Calu3 (cell line): ENCODE measurements at regions of chr3 and their contacts with region 1.

Region 1: DNA sequence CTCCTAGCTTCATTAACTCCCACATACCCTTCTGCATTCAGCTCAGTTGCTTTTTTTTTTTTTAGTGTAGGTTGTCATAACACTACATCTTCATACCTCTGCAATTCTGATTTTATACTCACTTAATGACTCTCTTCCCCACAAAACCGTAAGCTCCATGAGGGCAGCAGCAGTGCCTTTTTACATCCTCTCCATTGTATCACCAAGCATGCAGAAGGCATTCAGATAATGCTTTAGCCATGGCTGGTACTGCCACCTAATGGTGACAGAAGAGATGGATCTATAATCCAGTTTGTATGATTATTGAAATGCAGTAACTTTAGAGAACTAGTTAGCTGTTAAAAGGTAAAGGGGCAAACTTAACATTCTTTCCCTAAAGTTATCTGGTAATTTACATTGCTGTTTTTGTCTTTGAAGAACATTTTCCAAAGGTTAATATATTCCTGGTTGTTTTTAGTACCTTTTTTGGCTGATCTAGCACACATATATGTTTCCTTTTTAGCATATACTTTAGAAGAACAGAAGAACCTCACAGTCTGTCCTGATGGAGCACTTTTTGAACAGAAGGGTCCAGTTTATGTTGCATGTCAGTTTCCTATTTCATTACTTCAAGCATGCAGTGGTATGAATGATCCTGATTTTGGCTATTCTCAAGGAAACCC is 36.8 kb downstream of the ATP1B3 start:
- DNase-seq: peak; percentile 68
- H3K4me3 Mint-ChIP-seq: no peak overlapping the region
- H3K27ac Mint-ChIP-seq: no peak overlapping the region
- H3K4me1 Mint-ChIP-seq: no peaks in the 10 kb centered on the region
- H3K27me3 Mint-ChIP-seq: no peaks in the 10 kb centered on the region
- CTCF ChIP-seq: peak; percentile 47

Region 2: DNA sequence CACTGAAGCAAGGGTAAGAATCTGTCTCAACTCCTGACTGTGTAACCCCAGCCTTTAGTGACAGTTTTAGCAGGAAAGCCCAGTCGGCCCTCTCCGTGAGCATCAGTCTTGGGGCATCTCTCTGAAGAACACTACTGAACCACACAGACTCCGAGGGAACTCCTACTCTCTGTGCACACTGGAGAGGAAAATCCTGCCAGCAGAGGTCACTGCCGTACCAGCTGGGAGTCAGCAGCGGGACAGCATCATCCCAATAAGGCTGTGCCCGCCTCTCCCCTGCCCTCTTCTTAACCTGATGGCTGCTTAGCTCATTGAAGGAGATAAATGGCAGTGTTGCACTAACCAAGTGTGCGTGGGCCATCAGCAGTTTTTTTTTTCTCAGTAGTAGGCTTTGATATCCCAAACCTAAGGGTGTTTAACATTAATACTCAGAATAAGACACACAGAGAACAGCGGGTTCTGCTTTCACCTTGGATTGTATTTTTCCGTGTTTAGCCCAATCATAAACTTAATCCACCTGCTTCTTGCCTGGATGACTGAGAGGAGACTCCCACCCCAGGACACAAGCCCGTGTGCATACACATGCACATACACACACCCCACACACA is 453.1 kb before region 1 on chr3:
- CTCF ChIA-PET with region 1: no interaction called
- intact Hi-C with region 1: loop called (anchors 1 kb)
- DNase-seq: peak; percentile 96
- H3K4me3 Mint-ChIP-seq: no peak overlapping the region
- H3K27ac Mint-ChIP-seq: no peak overlapping the region
- H3K4me1 Mint-ChIP-seq: peaks cover 27% of the 10 kb centered on the region
- H3K27me3 Mint-ChIP-seq: no peaks in the 10 kb centered on the region
- CTCF ChIP-seq: peak; percentile 90

Region 3: DNA sequence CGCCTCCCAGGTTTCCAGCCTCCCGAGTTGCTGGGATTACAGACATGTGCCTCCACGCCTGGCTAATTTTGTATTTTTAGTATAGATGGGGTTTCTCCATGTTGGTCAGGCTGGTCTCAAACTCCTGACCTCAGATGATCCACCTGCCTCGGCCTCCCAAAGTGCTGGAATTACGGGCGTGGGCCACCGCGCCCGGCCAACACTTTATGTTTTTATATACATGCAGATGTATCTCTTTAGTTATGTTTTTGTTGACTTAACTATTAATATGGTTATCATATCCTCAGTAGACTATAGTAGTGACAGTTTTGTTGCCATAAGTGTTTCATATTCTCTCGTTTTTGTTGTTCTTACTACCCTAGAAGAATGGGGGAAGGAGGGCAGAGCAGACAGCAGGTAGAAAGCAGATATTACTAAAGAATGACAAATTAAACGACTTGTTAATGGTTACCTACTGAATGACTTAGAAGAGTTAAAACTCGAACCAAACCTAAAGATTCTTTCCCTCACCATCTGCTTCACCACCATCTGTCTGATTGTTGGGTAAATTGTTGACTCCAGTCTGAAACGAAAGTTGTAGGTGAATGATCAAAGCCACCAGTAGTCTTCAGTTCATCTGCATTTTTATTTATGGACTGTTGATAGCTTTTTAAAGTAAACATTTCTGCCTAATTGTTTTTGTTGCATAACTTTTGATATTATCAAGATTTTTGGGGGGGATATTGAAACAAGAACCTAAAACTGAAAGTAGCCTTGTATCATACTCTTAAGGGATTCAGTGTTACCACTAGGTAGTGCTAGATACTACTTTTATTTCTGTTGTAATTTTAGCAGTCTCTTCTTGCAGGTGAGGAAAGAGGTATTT is 337.2 kb before region 1 on chr3:
- CTCF ChIA-PET with region 1: no interaction called
- intact Hi-C with region 1: loop called (anchors 1 kb)
- DNase-seq: no peak
- H3K4me3 Mint-ChIP-seq: no peak overlapping the region
- H3K27ac Mint-ChIP-seq: no peak overlapping the region
- H3K4me1 Mint-ChIP-seq: no peaks in the 10 kb centered on the region
- H3K27me3 Mint-ChIP-seq: no peaks in the 10 kb centered on the region
- CTCF ChIP-seq: peak; percentile 39

Region 4: GRCh38 chr3:141610939-141611338 is 302.3 kb before region 1 on chr3:
- CTCF ChIA-PET with region 1: no interaction called
- intact Hi-C with region 1: loop called (anchors 5 kb)
- DNase-seq: no peak
- H3K4me3 Mint-ChIP-seq: no peak overlapping the region
- H3K27ac Mint-ChIP-seq: no peak overlapping the region
- H3K4me1 Mint-ChIP-seq: no peaks in the 10 kb centered on the region
- H3K27me3 Mint-ChIP-seq: no peaks in the 10 kb centered on the region
- CTCF ChIP-seq: no peak